ENCODE measurements at regions of chr7 and their contacts with region 1.

Region 1: DNA sequence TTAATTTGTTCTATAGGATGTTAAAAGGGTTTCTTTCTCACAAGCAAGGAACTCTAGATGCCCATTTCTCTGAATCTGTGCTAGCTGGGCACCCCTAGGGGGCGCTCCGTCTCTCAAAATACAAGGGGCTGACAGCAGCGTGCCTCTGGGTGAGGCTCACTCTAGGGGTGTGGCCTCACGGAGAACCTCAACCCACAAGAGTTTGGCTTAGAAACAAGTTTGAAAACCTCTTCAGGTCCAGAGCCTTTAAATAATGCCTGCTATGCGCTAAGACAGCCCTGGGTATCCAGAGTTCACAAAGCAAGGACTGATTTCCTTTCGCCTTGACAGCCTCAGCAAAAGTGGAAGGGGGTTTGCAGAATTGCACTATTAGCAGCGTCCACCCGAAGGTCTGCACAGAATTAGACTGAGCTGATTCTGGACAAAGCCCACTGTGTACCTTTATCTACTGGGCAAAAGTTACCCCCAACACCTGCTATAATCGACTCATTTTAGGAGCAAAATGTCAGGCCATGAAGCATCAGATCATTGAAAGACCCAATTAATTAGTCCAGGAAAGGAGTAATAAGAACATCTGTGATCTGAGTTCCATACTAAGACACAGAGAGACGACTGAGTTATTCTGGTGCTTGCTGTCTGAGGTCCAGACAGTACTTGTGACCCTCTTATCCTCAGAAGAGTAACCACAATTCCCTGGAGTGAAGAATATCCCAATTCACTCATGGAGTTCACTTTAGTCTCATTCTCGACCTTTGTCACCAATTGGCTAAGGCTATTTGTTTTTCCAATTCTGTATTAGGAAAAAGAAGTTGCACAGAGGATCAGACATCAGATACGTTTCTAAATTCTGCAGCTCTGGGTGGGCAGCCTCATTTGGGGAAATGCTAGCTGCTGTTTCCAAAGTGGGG is 574 bp upstream of the CPED1 start:
- DNase-seq: peak; percentile 95
- H3K4me3 Mint-ChIP-seq: peak overlapping the region; percentile 85
- H3K27ac Mint-ChIP-seq: no peak overlapping the region
- H3K4me1 Mint-ChIP-seq: peaks cover 14% of the 10 kb centered on the region
- H3K27me3 Mint-ChIP-seq: peaks cover 54% of the 10 kb centered on the region

Region 2: DNA sequence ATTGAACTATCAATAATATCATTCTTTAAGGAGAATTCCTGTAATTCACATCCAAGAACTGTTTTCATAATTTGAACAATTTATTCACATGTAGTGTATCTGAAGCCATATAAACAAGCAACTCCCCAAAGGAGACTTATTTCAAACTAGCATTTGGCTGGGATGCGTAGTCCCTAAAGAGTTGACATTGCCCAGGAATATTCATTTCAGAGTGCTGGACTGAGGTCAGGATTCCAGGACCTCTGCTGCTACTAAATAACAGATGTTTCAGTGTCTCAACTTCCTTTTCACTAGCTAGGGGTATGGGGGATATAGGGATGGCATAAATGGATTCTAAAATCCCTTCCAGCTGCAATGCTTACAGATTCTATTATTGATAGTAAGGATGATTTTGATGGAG is 307.0 kb before region 1 on chr7:
- intact Hi-C with region 1: no loop called
- DNase-seq: no peak
- H3K4me3 Mint-ChIP-seq: no peak overlapping the region
- H3K27ac Mint-ChIP-seq: no peak overlapping the region
- H3K4me1 Mint-ChIP-seq: no peaks in the 10 kb centered on the region
- H3K27me3 Mint-ChIP-seq: no peaks in the 10 kb centered on the region

Region 3: DNA sequence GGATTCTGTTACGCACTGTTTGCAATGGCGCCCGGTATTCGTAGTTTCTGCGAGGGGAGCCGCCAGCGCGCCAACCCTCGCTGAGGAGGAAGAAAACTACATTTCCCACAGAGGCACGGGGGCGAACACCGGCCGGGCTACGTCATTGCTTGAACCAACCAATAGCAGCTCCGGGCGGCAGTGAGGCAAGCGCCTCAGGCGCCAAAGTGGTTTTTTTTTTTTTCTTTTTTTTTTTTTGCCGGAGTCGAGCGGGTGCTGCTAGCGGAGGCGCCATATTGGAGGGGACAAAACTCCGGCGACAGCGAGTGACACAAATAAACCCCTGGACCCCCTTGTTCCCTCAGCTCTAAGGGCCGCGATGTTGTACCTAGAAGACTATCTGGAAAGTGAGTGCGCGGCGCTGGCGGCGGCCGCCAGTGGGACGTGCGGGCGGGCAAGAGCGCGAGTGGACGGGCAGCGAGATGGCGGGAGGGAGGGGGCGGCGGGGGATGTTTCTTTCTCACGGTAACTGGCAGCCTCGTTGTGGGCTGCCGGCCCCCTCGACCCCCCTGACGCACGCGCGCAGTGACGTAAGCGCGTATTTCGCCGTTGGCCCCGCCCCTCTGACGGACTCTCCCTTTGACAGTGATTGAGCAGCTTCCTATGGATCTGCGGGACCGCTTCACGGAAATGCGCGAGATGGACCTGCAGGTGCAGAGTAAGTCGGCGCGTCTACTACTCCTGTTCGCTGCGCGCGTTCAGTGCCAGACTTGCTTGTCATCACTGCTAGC is 37.2 kb before region 1 on chr7 and contains the start of gene ING3:
- intact Hi-C with region 1: loop called (anchors 2 kb)
- DNase-seq: peak; percentile 100
- H3K4me3 Mint-ChIP-seq: peak within 1 kb of the TSS; percentile 96
- H3K27ac Mint-ChIP-seq: peak within 1 kb of the TSS; percentile 99
- H3K4me1 Mint-ChIP-seq: peaks cover 23% of the 10 kb centered on the region
- H3K27me3 Mint-ChIP-seq: peaks cover 17% of the 10 kb centered on the region
- total RNA-seq, gene ING3: 23.5 and 24.3 TPM in 2 replicates

Region 4: DNA sequence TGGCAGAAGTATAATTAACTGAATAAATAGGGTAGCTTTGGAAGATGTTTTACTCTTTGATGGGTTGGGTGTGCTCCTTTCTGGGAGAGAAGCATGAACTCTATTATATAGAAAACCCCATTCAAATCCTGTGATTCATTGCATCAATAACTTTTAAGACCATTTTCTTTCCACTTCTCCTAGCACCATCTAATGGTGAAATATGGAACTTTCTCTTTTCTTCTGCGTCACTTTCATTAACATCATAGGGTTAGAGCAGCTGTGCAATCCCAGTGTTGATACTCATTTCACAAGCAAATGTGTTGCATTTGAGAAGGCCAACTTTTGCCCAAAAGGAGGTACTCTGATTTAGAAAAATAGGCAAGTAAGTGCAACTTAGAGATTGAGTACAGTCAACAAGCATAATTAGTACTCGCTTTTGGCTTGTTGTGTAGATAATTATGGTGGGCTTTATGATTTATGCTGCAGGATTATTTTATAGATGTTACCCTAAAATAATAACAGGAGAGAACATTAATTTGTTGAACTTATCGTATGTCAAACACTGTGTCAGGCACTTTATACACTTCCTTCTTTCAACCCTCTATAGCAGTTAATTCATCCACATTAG is 93.5 kb after region 1 on chr7:
- intact Hi-C with region 1: loop called (anchors 1 kb)
- DNase-seq: peak; percentile 63
- H3K4me3 Mint-ChIP-seq: no peak overlapping the region
- H3K27ac Mint-ChIP-seq: no peak overlapping the region
- H3K4me1 Mint-ChIP-seq: no peaks in the 10 kb centered on the region
- H3K27me3 Mint-ChIP-seq: peaks cover 22% of the 10 kb centered on the region

Region 5: DNA sequence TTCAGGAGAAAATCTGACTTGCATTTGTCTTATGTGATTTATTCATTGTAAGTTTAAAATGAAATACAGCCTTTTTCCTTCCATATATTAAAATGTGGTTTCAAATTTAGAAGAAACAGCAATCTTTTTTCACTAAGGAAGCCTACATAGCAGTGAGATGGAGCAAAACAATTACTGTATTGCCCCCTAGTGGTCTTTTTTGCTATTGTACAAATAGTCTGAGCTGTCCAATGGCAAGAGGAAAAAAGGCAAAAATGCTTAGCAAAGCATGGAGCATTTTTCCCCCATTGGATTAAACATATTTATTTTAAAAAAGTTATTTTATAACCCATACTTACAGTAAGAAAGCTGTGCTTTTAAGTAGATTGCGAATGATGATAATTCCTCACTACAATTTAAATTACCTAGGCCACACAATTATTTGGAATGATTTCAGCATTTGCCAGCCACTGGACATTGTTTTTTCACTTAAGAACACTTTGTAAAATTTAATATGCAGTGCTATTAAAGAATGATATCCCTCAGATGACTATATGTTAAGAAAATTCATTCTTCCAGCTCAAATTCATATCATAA is 120.1 kb after region 1 on chr7:
- intact Hi-C with region 1: loop called (anchors 1 kb)
- DNase-seq: peak; percentile 64
- H3K4me3 Mint-ChIP-seq: no peak overlapping the region
- H3K27ac Mint-ChIP-seq: no peak overlapping the region
- H3K4me1 Mint-ChIP-seq: no peaks in the 10 kb centered on the region
- H3K27me3 Mint-ChIP-seq: peaks cover 28% of the 10 kb centered on the region

Region 6: DNA sequence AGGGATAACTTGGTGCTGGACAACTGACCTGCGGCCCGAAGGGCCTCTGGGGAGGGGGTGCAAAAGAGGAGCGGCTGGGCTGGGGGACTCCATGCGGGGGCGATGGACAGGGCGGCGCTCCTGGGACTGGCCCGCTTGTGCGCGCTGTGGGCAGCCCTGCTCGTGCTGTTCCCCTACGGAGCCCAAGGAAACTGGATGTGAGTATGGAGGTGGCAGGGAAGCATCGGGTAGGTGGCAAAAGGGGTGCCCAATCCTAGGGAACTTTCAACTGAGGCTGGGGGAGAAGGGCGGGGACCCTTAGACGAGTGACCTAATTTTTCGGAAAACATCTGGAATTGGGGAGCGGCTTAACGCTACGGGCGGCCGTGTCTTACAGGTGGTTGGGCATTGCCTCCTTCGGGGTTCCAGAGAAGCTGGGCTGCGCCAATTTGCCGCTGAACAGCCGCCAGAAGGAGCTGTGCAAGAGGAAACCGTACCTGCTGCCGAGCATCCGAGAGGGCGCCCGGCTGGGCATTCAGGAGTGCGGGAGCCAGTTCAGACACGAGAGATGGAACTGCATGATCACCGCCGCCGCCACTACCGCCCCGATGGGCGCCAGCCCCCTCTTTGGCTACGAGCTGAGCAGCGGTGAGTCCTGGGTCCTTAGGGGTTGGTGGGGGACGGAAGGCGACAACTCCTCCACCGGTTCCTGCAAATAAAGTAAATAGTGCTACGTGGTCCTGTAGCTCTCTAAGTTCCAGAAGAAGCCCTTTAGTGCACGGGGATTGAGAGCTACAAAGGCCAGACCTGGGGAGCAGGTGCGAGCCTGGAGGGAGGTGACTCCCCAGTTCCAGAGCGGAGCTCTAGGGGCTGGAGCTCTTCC is 341.5 kb after region 1 on chr7:
- intact Hi-C with region 1: loop called (anchors 5 kb)
- DNase-seq: peak; percentile 73
- H3K4me3 Mint-ChIP-seq: peak overlapping the region; percentile 71
- H3K27ac Mint-ChIP-seq: no peak overlapping the region
- H3K4me1 Mint-ChIP-seq: peaks cover 9% of the 10 kb centered on the region
- H3K27me3 Mint-ChIP-seq: peaks cover 63% of the 10 kb centered on the region

Region 7: DNA sequence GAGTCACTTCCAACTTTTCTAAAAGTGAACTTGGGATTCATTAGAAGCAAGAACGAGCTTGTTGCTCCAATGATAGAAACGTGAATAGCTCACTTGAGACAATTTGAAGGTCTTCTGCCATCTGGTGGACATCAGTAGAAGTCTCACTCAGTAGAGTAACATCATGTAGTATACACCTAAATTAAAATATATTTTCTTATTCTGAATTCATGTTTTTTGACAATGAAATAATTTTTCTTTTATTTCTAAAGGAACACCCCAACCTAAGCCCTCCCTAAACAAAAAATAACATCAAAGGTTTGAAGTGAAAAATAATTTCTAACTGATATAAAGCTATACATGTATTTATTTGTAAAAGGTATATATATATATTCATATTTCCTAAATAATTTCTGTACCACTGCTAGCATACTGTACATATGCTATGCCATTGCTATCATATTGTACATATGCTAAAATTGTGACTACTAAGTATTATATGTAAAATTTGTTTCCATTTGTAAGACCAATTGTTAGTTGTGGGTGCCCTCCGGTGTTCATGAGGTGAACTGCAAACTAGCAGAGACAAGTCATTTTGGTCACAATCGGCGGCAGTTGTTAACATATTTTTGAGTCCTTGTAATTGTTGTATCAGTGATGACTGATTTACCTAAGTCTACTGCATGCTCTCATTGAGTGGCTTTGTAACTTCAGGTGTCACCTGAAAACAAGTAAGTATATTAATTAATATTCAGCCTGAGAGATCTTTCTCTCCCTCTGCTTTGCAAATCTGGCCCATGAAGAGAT is 1006.9 kb after region 1 on chr7:
- intact Hi-C with region 1: loop called (anchors 2 kb)
- DNase-seq: peak; percentile 82
- H3K4me3 Mint-ChIP-seq: no peak overlapping the region
- H3K27ac Mint-ChIP-seq: no peak overlapping the region
- H3K4me1 Mint-ChIP-seq: no peaks in the 10 kb centered on the region
- H3K27me3 Mint-ChIP-seq: no peaks in the 10 kb centered on the region